B cell (primary cell): ENCODE measurements at regions of chr6 and their contacts with region 1.

Region 1: GRCh38 chr6:57316581-57317059 is 810 bp upstream of the PRIM2 start:
- DNase-seq: peak; percentile 88
- ATAC-seq: peak; percentile 83
- H3K4me3 ChIP-seq: peak overlapping the region; percentile 52 to 98 (median 78)
- H3K4me3 Mint-ChIP-seq: peak overlapping the region; percentile 98
- H3K27ac ChIP-seq: peak overlapping the region in 1 of 2 donors; percentile 60
- H3K27ac Mint-ChIP-seq: peak overlapping the region; percentile 93
- H3K4me1 ChIP-seq: peaks cover 7 to 8% of the 10 kb centered on the region in 2 donors
- H3K4me1 Mint-ChIP-seq: peaks cover 20% of the 10 kb centered on the region
- H3K27me3 ChIP-seq: peaks cover 0 to 3% (median 0%) of the 10 kb centered on the region in 4 experiments
- H3K27me3 Mint-ChIP-seq: no peaks in the 10 kb centered on the region
- CTCF ChIP-seq: peak; percentile 89

Region 2: GRCh38 chr6:56637640-56638039 is 679.0 kb before region 1 on chr6:
- CTCF ChIA-PET with region 1: interaction called, 3 read pairs
- POLR2A ChIA-PET with region 1: no interaction called
- intact Hi-C with region 1: loop called (anchors 1 kb)
- DNase-seq: peak; percentile 15
- ATAC-seq: no peak
- H3K4me3 ChIP-seq: no peak overlapping the region
- H3K4me3 Mint-ChIP-seq: no peak overlapping the region
- H3K27ac ChIP-seq: no peak overlapping the region
- H3K27ac Mint-ChIP-seq: no peak overlapping the region
- H3K4me1 ChIP-seq: no peaks in the 10 kb centered on the region
- H3K4me1 Mint-ChIP-seq: no peaks in the 10 kb centered on the region
- H3K27me3 ChIP-seq: no peaks in the 10 kb centered on the region
- H3K27me3 Mint-ChIP-seq: peaks cover 7% of the 10 kb centered on the region
- CTCF ChIP-seq: peak; percentile 42

Region 3: GRCh38 chr6:57089687-57090460 is 226.7 kb before region 1 on chr6 and contains the start of gene ZNF451:
- CTCF ChIA-PET with region 1: no interaction called
- POLR2A ChIA-PET with region 1: no interaction called
- intact Hi-C with region 1: loop called (anchors 1 kb)
- DNase-seq: peak; percentile 96
- ATAC-seq: peak; percentile 94
- H3K4me3 ChIP-seq: peak within 1 kb of the TSS; percentile 50 to 66 (median 58)
- H3K4me3 Mint-ChIP-seq: peak within 1 kb of the TSS; percentile 85
- H3K27ac ChIP-seq: peak within 1 kb of the TSS; percentile 64 to 81
- H3K27ac Mint-ChIP-seq: peak within 1 kb of the TSS; percentile 94
- H3K4me1 ChIP-seq: peaks cover 11 to 14% of the 10 kb centered on the region in 2 donors
- H3K4me1 Mint-ChIP-seq: peaks cover 29% of the 10 kb centered on the region
- H3K27me3 ChIP-seq: no peaks in the 10 kb centered on the region
- H3K27me3 Mint-ChIP-seq: no peaks in the 10 kb centered on the region
- CTCF ChIP-seq: no peak
- total RNA-seq, gene ZNF451: 86.3 and 106 TPM in 2 replicates

Region 4: GRCh38 chr6:57147955-57148858 is 168.4 kb before region 1 on chr6:
- CTCF ChIA-PET with region 1: no interaction called
- POLR2A ChIA-PET with region 1: no interaction called
- intact Hi-C with region 1: no loop called
- DNase-seq: no peak
- ATAC-seq: no peak
- H3K4me3 ChIP-seq: no peak overlapping the region
- H3K4me3 Mint-ChIP-seq: no peak overlapping the region
- H3K27ac ChIP-seq: no peak overlapping the region
- H3K27ac Mint-ChIP-seq: no peak overlapping the region
- H3K4me1 ChIP-seq: no peaks in the 10 kb centered on the region
- H3K4me1 Mint-ChIP-seq: no peaks in the 10 kb centered on the region
- H3K27me3 ChIP-seq: no peaks in the 10 kb centered on the region
- H3K27me3 Mint-ChIP-seq: no peaks in the 10 kb centered on the region
- CTCF ChIP-seq: no peak

Region 5: DNA sequence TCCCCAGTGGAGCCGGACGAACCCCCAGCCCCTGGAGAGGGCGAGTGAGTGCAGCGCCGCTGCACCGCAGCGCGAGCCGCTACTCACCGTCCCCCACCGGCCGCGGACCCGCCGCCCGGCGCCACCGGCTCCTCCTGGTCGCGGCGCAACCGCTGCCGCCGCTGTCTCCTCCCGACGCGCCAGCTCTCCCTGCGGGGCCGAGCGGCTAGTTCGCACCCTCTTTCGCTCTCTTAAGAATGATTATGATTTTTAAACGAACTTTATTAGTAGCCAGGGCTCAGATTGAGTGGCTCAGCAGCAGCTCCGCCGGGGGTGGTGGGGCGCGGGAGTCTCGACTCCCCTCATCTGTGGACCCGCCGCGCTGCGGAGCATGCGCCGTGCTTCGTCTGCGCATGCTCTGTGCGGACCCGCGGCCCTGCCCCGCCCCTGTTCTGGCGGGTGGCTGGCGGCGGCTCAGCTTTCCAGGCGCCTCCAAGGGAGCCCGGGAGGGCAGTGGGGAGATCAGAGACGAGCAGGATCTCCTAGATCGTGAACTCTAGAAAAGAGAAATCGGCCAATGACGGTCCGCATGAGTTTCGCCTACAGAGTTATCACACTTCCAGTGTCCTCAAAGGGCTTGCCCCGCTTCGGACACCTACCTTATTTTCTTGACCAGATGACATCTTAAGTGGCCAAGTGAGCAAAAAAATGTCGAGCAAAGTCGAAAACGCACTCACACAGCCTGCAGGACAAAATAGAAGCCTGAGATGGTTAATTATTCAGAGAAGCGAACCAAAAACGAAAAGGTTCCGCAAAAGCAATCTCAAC is 94.5 kb before region 1 on chr6 and contains the start of gene RAB23:
- CTCF ChIA-PET with region 1: interaction called, 9 read pairs
- POLR2A ChIA-PET with region 1: no interaction called
- intact Hi-C with region 1: loop called (anchors 2 kb)
- DNase-seq: peak; percentile 91
- ATAC-seq: peak; percentile 89
- H3K4me3 ChIP-seq: peak within 1 kb of the TSS; percentile 76 to 95 (median 90)
- H3K4me3 Mint-ChIP-seq: peak within 1 kb of the TSS; percentile 99
- H3K27ac ChIP-seq: peak within 1 kb of the TSS in 1 of 2 donors; percentile 46
- H3K27ac Mint-ChIP-seq: peak within 1 kb of the TSS; percentile 93
- H3K4me1 ChIP-seq: peaks cover 10 to 13% of the 10 kb centered on the region in 2 donors
- H3K4me1 Mint-ChIP-seq: peaks cover 15% of the 10 kb centered on the region
- H3K27me3 ChIP-seq: peaks cover 0 to 15% (median 4%) of the 10 kb centered on the region in 4 experiments
- H3K27me3 Mint-ChIP-seq: peaks cover 22% of the 10 kb centered on the region
- CTCF ChIP-seq: peak; percentile 24
- total RNA-seq, gene RAB23: 0.78 and 0.94 TPM in 2 replicates